Panc1 (cell line): ENCODE measurements at regions of chr3 and their contacts with region 1.

Region 1: DNA sequence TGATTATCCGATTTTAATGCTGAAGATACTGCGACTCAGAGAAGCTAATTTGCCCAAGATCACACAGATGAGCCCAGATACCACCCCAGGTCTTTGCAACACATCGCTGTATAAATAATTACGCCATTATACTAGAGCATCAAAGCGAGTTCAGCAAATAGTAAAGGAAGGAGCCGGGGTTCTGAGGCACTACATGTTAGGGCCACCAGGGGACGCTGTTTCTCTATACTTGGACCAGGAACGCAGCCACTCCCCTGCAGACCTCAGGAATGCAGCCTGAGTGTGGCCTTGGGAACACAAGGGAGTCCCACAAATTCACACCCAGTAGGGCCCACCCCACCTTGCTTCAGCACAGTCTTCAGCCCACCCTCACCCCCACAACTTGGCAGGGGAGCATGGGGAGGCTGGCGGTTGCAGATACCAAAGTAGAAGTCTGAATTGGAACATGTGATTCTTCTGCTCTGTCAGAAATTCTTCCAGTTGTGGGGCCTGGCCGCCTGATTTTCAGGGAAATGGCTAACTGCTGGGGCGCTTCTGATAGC is 57.8 kb upstream of the RYK start:
- DNase-seq: peak; percentile 84
- ATAC-seq: peak; percentile 83
- H3K4me3 ChIP-seq: peak overlapping the region in 1 of 2 experiments; percentile 46; a peak in 2 of 4 replicates
- H3K27ac ChIP-seq: peak overlapping the region; percentile 88
- H3K4me1 ChIP-seq: peaks cover 47% of the 10 kb centered on the region
- H3K27me3 ChIP-seq: no peaks in the 10 kb centered on the region
- CTCF ChIP-seq: peak; percentile 100

Region 2: DNA sequence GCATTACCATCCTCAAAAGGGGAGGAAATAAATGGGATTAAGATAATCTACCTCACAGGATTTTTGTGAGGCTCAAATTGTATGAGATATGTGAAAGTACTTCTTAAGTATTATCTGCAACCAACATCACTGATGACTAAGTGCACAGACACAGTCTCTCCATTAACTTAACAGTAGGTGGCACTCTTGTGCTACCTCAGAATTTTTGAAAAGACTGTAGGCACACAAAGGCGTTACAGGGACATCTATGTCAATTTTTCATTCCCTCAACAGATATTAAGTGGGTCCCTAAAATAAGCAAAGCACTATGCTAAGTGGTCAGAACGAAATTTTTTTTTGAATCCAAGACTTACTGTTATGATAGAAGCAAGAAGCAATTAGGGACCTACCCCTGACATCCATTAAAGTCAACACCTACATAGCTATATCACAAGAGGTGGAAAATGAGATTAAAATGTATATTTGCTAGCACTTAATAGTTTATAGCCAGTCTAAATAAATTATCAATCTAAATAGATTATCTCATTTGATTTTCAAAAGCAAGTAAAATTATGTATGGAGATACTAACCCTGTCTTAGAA is 110.7 kb before region 1 on chr3:
- CTCF ChIA-PET with region 1: no interaction called
- POLR2A ChIA-PET with region 1: no interaction called
- in situ Hi-C with region 1: no loop called
- intact Hi-C with region 1: loop called (anchors 5 kb)
- DNase-seq: peak; percentile 67
- ATAC-seq: peak; percentile 76
- H3K4me3 ChIP-seq: no peak overlapping the region
- H3K27ac ChIP-seq: no peak overlapping the region
- H3K4me1 ChIP-seq: no peaks in the 10 kb centered on the region; the same call in 1 of the 2 replicates
- H3K27me3 ChIP-seq: no peaks in the 10 kb centered on the region
- CTCF ChIP-seq: peak; percentile 78; the same call in 1 of the 2 replicates

Region 3: GRCh38 chr3:134373994-134374790 is 65.8 kb after region 1 on chr3 and contains the start of gene AMOTL2:
- CTCF ChIA-PET with region 1: no interaction called
- POLR2A ChIA-PET with region 1: interaction called, 3 read pairs
- in situ Hi-C with region 1: no loop called
- intact Hi-C with region 1: loop called (anchors 2 kb)
- DNase-seq: peak; percentile 67
- ATAC-seq: peak; percentile 84
- H3K4me3 ChIP-seq: peak within 1 kb of the TSS; percentile 87 to 95
- H3K27ac ChIP-seq: peak within 1 kb of the TSS; percentile 94
- H3K4me1 ChIP-seq: peaks cover 65% of the 10 kb centered on the region
- H3K27me3 ChIP-seq: no peaks in the 10 kb centered on the region
- CTCF ChIP-seq: no peak
- total RNA-seq, gene AMOTL2: 146 TPM